Naive thymus-derived CD4-positive, alpha-beta T cell (primary cell): ENCODE measurements at regions of chr11 and their contacts with region 1.

Region 1: DNA sequence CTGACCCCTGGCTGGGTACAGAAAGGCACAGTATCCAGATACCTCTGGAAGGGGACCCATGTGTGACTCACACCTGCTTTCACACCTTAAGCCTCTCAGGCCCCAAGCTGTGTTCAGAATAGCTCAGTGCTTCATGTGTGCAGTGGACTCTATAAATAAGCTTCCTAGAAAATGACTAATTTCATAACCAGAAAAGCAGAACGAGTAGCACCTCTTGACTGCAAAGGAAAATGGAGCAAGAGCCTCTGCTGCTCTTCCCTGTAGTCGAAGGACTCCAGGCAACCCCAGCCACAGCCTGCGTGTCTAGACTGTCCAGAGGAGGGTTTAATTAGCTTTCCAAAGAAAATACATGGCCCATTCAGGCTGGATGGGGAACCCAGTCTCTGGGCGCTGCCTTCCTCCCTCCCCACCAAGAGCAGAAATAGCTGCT is 23.1 kb downstream of the PTPN5 start:
- DNase-seq: no peak
- ATAC-seq: no peak
- H3K4me3 ChIP-seq: no peak overlapping the region
- H3K4me3 Mint-ChIP-seq: no peak overlapping the region
- H3K27ac ChIP-seq: no peak overlapping the region
- H3K27ac Mint-ChIP-seq: no peak overlapping the region
- H3K4me1 ChIP-seq: no peaks in the 10 kb centered on the region
- H3K4me1 Mint-ChIP-seq: peaks cover 0 to 28% (median 0%) of the 10 kb centered on the region in 7 donors
- H3K27me3 ChIP-seq: no peaks in the 10 kb centered on the region
- H3K27me3 Mint-ChIP-seq: peaks cover 4 to 27% (median 16%) of the 10 kb centered on the region in 5 donors

Region 2: DNA sequence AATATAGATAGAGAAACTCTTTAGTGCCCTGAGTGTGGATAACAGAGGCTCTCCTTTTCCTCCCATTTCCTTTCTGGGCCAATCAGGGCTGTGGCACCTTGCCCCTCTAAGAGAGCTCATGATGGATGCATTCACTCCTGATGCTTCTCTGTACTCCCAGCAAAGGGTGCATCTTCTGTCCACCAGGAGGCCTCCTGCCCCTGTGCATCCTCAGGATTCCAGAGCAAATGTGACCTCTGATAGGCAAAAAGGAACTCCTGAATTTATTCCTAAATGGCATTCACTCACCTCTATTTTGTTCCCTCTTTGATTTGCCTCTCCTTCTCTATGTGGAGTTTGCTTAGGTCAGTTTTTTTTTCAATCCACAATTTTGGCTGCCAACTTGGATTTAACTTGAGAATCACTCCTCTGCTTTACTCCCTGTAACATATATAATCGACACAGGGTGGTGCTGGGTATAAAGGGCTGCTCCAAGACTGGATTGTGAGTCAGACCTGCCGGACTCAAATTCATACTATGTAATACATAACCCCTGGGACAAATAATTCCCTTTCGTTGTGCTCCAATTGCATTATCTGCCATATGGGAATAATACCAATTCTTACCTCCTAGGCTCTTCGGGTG is 597.0 kb before region 1 on chr11:
- CTCF ChIA-PET with region 1: no interaction called
- POLR2A ChIA-PET with region 1: no interaction called
- intact Hi-C with region 1: loop called in 1 of 2 experiments (anchors 1 kb)
- DNase-seq: peak in 1 of 9 donors; percentile 4
- ATAC-seq: no peak
- H3K4me3 ChIP-seq: no peak overlapping the region
- H3K4me3 Mint-ChIP-seq: no peak overlapping the region
- H3K27ac ChIP-seq: no peak overlapping the region
- H3K27ac Mint-ChIP-seq: no peak overlapping the region
- H3K4me1 ChIP-seq: no peaks in the 10 kb centered on the region
- H3K4me1 Mint-ChIP-seq: no peaks in the 10 kb centered on the region
- H3K27me3 ChIP-seq: peaks cover 0 to 5% of the 10 kb centered on the region in 2 donors
- H3K27me3 Mint-ChIP-seq: peaks cover 25 to 43% (median 37%) of the 10 kb centered on the region in 5 donors

Region 3: DNA sequence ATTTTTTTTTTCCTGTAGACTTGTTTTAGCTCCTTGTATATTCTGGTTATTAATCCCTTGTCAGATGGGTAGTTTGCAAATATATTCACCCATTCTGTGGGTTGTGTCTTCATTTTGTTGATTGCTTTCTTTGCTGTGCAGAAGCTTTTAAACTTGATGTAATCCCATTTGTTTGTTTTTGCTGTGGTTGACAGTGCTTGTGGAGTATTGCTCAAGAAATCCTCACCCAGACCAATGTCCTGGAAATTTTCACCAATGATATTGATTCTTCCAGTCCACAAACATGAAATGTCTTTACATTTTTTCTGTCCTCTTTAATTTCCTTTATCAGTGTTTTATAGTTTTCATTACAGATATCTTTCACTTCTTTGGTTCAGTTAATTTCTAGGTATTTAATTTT is 226.4 kb after region 1 on chr11:
- CTCF ChIA-PET with region 1: no interaction called
- POLR2A ChIA-PET with region 1: no interaction called
- intact Hi-C with region 1: no loop called
- DNase-seq: no peak
- ATAC-seq: no peak
- H3K4me3 ChIP-seq: no peak overlapping the region
- H3K4me3 Mint-ChIP-seq: no peak overlapping the region
- H3K27ac ChIP-seq: no peak overlapping the region
- H3K27ac Mint-ChIP-seq: no peak overlapping the region
- H3K4me1 ChIP-seq: no peaks in the 10 kb centered on the region
- H3K4me1 Mint-ChIP-seq: peaks cover 0 to 3% (median 0%) of the 10 kb centered on the region in 7 donors
- H3K27me3 ChIP-seq: no peaks in the 10 kb centered on the region
- H3K27me3 Mint-ChIP-seq: peaks cover 2 to 38% (median 32%) of the 10 kb centered on the region in 5 donors